Natural killer cell (primary cell): ENCODE measurements at regions of chr15 and their contacts with region 1.

Region 1: DNA sequence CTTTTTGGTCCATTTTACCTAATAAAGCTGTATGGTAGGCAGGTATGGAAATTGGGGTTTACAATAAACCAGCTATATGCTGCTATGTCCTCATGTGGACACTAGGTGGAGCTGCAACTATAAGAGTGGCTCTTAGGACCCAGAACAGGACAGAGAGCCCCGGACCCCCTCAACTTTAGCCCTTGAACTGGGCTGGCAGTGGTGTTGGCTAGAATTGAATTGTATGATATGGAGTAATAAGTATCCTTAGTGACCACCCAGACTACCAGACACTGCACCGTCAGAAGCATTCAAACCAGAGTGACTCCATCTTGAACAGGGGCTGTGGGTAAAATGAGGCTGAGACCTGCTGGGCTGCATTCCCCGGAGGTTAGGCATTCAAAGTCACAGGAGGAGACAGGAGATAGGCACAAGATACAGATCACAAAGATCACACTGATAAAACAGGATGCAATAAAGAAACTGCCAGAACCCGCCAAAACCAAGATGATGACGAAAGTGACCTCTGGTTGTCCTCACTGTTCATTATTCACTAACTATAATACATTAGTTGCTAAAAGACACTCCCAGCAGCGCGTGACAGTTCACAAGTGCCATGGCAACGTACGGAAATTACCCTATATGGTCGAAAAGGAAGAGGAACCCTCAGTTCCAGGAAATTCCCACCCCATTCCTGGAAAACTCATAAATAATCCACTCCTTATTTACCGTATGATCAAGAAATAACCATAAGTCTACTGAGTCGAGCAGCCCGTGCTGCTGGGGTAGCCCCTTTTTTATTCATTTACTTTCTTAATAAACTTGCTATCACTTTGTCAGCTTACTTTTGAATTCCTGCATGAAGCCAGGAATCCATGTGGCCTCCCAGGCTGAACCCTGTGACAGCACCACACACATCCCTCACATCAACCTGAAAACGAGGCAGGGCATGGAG is 68.7 kb upstream of the BLM start:
- DNase-seq: peak; percentile 42 to 85
- ATAC-seq: peak; percentile 84 to 88 (median 88)
- H3K4me3 ChIP-seq: no peak overlapping the region
- H3K4me3 Mint-ChIP-seq: peak overlapping the region; percentile 84
- H3K27ac ChIP-seq: peak overlapping the region; percentile 27
- H3K27ac Mint-ChIP-seq: peak overlapping the region; percentile 85 to 92
- H3K4me1 ChIP-seq: peaks cover 12% of the 10 kb centered on the region
- H3K4me1 Mint-ChIP-seq: peaks cover 9 to 24% of the 10 kb centered on the region in 2 donors
- H3K27me3 ChIP-seq: no peaks in the 10 kb centered on the region
- H3K27me3 Mint-ChIP-seq: peaks cover 0 to 7% of the 10 kb centered on the region in 2 donors
- CTCF ChIP-seq: peak; percentile 95

Region 2: DNA sequence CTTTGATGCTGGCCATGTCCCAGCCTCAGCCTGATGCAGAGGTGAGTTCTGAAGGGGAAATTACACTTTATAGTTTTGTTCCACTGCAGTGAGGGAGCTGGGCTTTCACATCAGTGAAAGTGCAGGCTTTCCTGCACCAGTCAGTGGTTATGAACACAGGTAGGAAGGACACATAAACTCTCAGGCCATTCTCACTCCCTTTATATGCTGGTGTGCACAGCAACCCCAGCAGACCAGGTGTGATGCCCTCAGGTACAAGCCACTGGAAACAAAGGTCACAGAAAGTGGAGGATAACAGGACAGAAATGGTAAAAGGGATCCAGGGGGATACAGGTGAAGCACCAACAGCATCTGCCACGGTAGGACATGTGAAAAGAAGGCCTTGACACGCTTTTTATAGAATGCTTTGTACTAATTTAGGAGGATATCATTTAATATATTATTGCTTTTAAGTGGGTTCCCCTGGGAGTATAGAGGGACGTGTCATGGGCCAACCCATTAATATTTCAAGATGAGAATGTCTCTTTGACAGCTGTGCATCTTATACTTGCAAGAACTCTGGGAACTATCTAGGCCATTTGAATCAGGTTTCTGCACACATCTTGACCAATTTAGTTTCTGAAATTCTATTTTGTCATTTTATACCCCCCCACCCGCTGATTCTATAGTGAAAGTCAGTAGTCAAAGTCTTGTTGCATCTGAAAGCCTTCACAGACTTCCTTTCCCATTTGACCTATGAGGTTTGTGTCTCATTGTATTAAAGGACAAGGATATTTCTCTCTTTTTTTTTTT is 43.8 kb after region 1 on chr15:
- intact Hi-C with region 1: loop called (anchors 1 kb)
- DNase-seq: no peak
- ATAC-seq: no peak
- H3K4me3 ChIP-seq: no peak overlapping the region
- H3K4me3 Mint-ChIP-seq: no peak overlapping the region
- H3K27ac ChIP-seq: no peak overlapping the region
- H3K27ac Mint-ChIP-seq: no peak overlapping the region
- H3K4me1 ChIP-seq: no peaks in the 10 kb centered on the region
- H3K4me1 Mint-ChIP-seq: peaks cover 0 to 4% of the 10 kb centered on the region in 2 donors
- H3K27me3 ChIP-seq: no peaks in the 10 kb centered on the region
- H3K27me3 Mint-ChIP-seq: no peaks in the 10 kb centered on the region
- CTCF ChIP-seq: no peak

Region 3: DNA sequence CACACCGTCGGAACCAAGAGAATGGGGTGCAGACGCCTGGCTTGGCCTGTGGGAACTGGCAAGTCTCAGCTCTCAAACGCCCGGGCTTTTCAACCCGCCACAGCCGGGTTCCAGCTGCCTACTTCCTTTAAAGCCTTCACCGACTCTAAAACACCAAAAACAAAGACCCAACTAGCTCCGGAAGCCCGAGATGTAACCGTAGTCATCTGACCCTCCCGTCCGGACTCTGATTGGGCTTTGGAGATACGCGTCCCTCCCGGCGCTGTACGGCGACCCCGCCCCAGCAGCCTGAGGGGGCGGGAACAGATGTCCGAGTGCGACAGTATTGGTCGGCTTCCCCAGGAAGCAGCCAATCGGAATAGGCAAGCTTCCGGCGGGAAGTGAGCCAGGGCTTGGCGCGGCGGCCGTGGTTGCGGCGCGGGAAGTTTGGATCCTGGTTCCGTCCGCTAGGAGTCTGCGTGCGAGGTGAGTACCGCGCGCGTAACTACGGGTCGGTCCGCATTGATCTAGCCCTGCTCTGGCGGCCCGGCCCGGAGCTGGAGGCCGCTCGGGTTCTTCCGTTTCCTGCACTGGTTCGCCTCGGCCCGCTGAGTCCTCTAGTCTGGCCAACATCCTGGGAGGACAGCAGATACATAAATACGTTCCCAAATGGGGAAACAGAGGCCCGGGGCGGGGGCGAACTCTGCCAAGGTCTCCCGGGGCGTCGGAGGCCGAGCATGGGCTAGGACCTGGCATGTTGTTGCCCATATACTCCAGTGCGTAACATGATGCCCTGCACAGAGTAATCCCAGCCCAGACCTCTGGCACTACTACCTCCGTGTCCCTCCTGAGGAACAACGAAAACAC is 68.8 kb after region 1 on chr15 and contains the start of gene BLM:
- intact Hi-C with region 1: loop called (anchors 1 kb)
- DNase-seq: peak; percentile 91 to 98
- ATAC-seq: peak; percentile 98 to 100 (median 99)
- H3K4me3 ChIP-seq: peak within 1 kb of the TSS; percentile 92
- H3K4me3 Mint-ChIP-seq: peak within 1 kb of the TSS; percentile 98
- H3K27ac ChIP-seq: peak within 1 kb of the TSS; percentile 82
- H3K27ac Mint-ChIP-seq: peak within 1 kb of the TSS; percentile 95 to 97
- H3K4me1 ChIP-seq: peaks cover 5% of the 10 kb centered on the region
- H3K4me1 Mint-ChIP-seq: peaks cover 37 to 39% of the 10 kb centered on the region in 2 donors
- H3K27me3 ChIP-seq: no peaks in the 10 kb centered on the region
- H3K27me3 Mint-ChIP-seq: no peaks in the 10 kb centered on the region
- CTCF ChIP-seq: no peak
- total RNA-seq, gene BLM: 9.9 to 15.9 (median 14.1) TPM

Region 4: GRCh38 chr15:90729261-90729660 is 80.9 kb after region 1 on chr15:
- intact Hi-C with region 1: no loop called
- DNase-seq: no peak
- ATAC-seq: no peak
- H3K4me3 ChIP-seq: no peak overlapping the region
- H3K4me3 Mint-ChIP-seq: no peak overlapping the region
- H3K27ac ChIP-seq: no peak overlapping the region
- H3K27ac Mint-ChIP-seq: no peak overlapping the region
- H3K4me1 ChIP-seq: no peaks in the 10 kb centered on the region
- H3K4me1 Mint-ChIP-seq: peaks cover 0 to 5% of the 10 kb centered on the region in 2 donors
- H3K27me3 ChIP-seq: no peaks in the 10 kb centered on the region
- H3K27me3 Mint-ChIP-seq: no peaks in the 10 kb centered on the region
- CTCF ChIP-seq: no peak

Region 5: DNA sequence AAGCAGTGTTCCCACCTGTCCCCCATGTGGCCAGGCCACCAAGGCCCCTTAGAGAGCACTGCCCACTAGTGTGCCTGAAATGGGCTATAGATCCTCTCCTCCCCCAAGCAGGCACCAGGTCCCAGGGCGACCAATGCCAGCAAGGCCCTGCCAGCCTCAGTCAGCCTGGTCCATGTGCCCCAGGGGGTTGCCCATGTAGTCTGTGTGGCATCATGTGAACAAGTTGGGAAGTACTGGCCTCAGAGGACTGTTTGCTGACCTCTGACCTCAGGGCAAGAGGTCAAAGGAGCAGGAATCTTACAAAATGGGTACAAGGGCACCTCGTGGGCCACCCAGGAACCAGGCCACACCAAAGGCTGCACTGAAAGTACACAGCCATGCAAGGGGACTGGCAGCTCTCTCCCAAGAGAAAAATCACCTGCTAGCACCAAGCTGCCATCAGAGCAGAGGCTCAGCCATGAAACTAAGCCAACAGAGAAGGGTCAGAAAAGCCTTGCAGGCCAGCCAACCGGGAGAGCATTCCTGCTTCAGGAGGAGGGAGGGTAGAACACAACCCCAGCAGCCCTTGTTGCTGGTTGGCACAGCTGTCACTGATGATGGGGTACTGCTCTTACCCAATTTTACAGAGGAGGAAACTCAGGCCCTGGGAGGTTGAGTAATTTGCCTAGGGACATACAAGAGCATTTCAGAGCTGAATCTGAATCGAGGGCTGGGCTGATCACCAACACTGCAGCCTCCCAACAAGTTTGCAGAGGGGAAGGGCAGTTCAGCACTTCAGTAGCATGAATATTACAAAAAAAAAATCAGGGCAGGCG is 214.8 kb after region 1 on chr15:
- intact Hi-C with region 1: no loop called
- DNase-seq: no peak
- ATAC-seq: no peak
- H3K4me3 ChIP-seq: no peak overlapping the region
- H3K4me3 Mint-ChIP-seq: no peak overlapping the region
- H3K27ac ChIP-seq: no peak overlapping the region
- H3K27ac Mint-ChIP-seq: no peak overlapping the region
- H3K4me1 ChIP-seq: peaks cover 10% of the 10 kb centered on the region
- H3K4me1 Mint-ChIP-seq: peaks cover 7 to 11% of the 10 kb centered on the region in 2 donors
- H3K27me3 ChIP-seq: no peaks in the 10 kb centered on the region
- H3K27me3 Mint-ChIP-seq: no peaks in the 10 kb centered on the region
- CTCF ChIP-seq: no peak

Region 6: DNA sequence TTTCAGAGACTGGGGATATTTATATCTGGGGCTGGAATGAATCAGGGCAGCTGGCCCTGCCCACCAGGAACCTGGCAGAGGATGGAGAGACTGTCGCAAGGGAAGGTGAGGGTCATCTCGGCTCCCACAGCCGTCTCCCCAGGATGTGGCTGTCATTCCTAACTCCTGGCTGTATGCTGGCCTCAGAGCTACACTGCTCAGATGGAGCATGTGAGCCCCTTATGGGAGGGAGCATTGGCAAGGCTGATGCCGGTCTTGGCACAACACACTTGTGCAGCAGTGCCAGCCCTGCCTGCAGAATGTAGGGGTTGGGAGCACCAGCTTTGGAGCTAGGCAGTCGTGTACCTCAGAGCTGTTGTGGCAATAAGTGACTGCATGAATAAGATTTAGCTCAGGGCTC is 311.5 kb after region 1 on chr15:
- intact Hi-C with region 1: no loop called
- DNase-seq: no peak
- ATAC-seq: no peak
- H3K4me3 ChIP-seq: no peak overlapping the region
- H3K4me3 Mint-ChIP-seq: no peak overlapping the region
- H3K27ac ChIP-seq: no peak overlapping the region
- H3K27ac Mint-ChIP-seq: no peak overlapping the region
- H3K4me1 ChIP-seq: peaks cover 15% of the 10 kb centered on the region
- H3K4me1 Mint-ChIP-seq: peaks cover 0 to 5% of the 10 kb centered on the region in 2 donors
- H3K27me3 ChIP-seq: no peaks in the 10 kb centered on the region
- H3K27me3 Mint-ChIP-seq: no peaks in the 10 kb centered on the region
- CTCF ChIP-seq: no peak